ENCODE measurements at regions of chr4 and their contacts with region 1.

Region 1: GRCh38 chr4:74133786-74134499 is 24.0 kb upstream of the MTHFD2L start:
- DNase-seq: peak in 13 of 14 experiments; percentile 1 to 68 (median 13)
- ATAC-seq: peak; percentile 29
- H3K4me3 ChIP-seq: no peak overlapping the region
- H3K4me3 Mint-ChIP-seq: no peak overlapping the region
- H3K27ac ChIP-seq: no peak overlapping the region
- H3K27ac Mint-ChIP-seq: no peak overlapping the region
- H3K4me1 ChIP-seq: no peaks in the 10 kb centered on the region
- H3K4me1 Mint-ChIP-seq: no peaks in the 10 kb centered on the region
- H3K27me3 ChIP-seq: no peaks in the 10 kb centered on the region
- H3K27me3 Mint-ChIP-seq: peaks cover 4% of the 10 kb centered on the region
- CTCF ChIP-seq: no peak

Region 2: DNA sequence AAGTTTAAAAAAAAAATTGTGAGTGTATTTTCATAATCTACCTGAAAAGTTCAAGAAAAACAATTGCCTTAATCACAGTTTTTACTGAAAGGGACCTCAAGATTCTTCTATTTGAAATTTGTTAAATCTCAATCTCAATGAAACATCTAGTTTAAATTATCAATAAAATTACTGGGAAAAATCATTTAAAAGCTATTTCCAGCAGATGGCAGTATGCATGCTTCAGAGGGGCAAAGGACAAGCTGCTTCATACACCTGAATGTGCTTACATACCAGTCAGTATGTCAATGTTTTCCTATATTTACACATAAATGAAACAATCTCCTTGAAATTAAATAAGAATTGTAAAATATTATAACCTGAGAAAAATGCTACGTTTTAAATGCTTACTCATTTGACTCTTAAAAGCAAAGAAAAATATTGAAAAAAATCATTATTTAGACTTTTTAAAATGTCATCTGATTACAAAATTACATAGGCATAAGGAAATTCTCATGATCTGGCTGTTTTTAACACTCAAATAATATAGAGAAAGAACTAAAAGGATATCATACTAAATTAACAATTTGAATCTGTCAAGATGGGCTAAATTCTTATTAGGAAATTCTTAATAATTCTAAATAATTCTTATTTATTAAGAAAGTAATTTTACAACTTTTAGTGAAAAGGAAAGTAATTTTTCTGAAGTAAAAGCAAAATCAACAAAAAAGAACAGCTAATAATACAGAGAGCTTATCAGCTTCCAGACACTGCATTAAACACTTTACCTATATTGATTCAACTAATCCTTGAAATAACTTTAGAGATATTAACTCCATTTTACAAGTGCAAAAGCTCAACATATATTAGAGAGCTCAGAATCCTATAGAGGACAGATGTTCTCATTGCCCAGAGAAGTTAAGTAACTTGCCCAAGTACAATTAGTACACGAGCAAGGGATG is 1807.0 kb before region 1 on chr4:
- CTCF ChIA-PET with region 1: no interaction called
- POLR2A ChIA-PET with region 1: no interaction called
- intact Hi-C with region 1: loop called in 1 of 2 experiments (anchors 10 kb)
- DNase-seq: peak in 3 of 14 experiments; percentile 9 to 14 (median 12)
- ATAC-seq: no peak
- H3K4me3 ChIP-seq: no peak overlapping the region
- H3K4me3 Mint-ChIP-seq: no peak overlapping the region
- H3K27ac ChIP-seq: no peak overlapping the region
- H3K27ac Mint-ChIP-seq: no peak overlapping the region
- H3K4me1 ChIP-seq: no peaks in the 10 kb centered on the region
- H3K4me1 Mint-ChIP-seq: no peaks in the 10 kb centered on the region
- H3K27me3 ChIP-seq: peaks cover 0 to 3% of the 10 kb centered on the region in 2 experiments
- H3K27me3 Mint-ChIP-seq: peaks cover 17% of the 10 kb centered on the region
- CTCF ChIP-seq: peak; percentile 48

Region 3: DNA sequence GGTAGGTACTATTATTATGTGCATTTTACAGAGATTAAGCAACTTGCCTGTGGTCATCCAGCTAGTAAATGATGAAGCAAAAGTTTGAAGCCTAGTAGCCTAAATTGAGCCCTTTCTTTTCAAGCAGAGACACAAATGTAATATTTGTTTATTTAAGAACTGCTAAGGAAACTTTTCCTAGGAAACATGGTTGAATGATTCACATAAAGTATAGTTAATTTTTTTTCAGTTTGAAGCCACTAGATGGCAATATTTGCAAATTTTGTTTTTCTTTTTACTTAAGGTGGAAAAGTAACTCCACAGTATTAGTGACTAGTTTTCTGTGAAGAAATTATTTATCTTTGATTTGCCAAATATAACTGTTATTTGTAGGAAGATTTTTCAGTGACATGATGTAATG is 822.5 kb before region 1 on chr4:
- CTCF ChIA-PET with region 1: no interaction called
- POLR2A ChIA-PET with region 1: no interaction called
- intact Hi-C with region 1: loop called in 1 of 2 experiments (anchors 10 kb)
- DNase-seq: peak in 2 of 14 experiments; percentile 2 to 5
- ATAC-seq: no peak
- H3K4me3 ChIP-seq: no peak overlapping the region
- H3K4me3 Mint-ChIP-seq: no peak overlapping the region
- H3K27ac ChIP-seq: no peak overlapping the region
- H3K27ac Mint-ChIP-seq: no peak overlapping the region
- H3K4me1 ChIP-seq: no peaks in the 10 kb centered on the region
- H3K4me1 Mint-ChIP-seq: no peaks in the 10 kb centered on the region
- H3K27me3 ChIP-seq: no peaks in the 10 kb centered on the region
- H3K27me3 Mint-ChIP-seq: no peaks in the 10 kb centered on the region
- CTCF ChIP-seq: peak; percentile 61

Region 4: DNA sequence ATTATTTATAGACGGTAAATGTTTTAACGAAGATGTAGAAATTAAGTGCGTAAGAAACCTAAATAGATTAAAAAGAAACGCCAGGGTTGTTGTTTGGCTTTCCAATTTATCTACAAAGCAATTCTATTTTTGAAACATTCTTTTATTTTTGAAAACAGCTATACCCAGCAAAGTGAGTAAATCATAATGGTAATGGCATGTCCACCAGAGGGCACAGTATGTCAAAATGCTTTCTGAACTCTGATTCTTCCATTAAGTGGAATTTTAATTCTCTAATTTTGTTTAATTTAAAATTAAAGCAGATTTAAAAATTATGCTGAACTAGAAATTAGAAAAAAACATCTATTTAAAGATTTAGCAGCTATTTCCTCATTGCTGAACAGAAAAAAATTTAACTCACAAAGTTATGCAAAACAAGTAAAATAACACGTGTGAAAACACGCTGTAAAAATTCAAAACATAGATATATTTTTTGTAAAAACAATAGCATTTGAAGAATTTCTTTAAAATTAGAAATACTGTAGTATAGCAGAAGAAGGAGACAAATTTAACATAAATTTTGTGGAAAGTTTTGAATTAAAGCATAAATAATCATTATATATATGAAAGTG is 540.2 kb before region 1 on chr4:
- CTCF ChIA-PET with region 1: no interaction called
- POLR2A ChIA-PET with region 1: no interaction called
- intact Hi-C with region 1: loop called (anchors 10 kb)
- DNase-seq: peak in 3 of 14 experiments; percentile 6 to 23 (median 20)
- ATAC-seq: no peak
- H3K4me3 ChIP-seq: no peak overlapping the region
- H3K4me3 Mint-ChIP-seq: no peak overlapping the region
- H3K27ac ChIP-seq: no peak overlapping the region
- H3K27ac Mint-ChIP-seq: no peak overlapping the region
- H3K4me1 ChIP-seq: no peaks in the 10 kb centered on the region
- H3K4me1 Mint-ChIP-seq: no peaks in the 10 kb centered on the region
- H3K27me3 ChIP-seq: no peaks in the 10 kb centered on the region
- H3K27me3 Mint-ChIP-seq: no peaks in the 10 kb centered on the region
- CTCF ChIP-seq: peak; percentile 45

Region 5: DNA sequence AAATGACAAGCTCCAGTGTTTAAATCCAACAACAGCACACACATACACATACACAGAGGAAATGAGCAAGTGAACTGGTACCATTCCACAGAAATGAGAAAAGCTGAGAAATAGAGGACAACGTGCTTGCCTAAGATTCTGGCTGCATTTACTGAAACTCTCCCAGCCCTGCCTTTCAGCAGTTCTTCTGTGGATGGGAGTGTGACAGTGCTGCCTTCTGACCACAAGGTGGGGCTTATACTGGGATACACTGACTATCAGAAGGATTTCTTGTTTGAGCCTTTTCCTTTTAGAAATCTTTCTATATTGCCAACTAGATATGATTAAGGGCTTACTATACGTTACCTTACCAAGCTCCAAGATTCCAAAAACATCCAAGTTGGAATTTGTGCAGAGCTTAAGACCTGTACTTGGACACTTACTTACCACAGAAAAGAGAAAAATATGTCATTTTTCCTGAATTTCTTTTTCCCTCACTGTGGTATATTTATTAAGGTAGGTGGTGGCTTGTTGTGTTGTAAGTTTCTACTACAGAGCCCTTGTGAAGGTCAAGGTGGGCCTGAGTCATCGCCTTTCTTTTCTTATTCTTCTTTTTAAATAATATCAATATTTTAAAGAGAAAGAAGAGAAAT is 404.3 kb before region 1 on chr4:
- CTCF ChIA-PET with region 1: no interaction called
- POLR2A ChIA-PET with region 1: no interaction called
- intact Hi-C with region 1: loop called in 1 of 2 experiments (anchors 10 kb)
- DNase-seq: no peak
- ATAC-seq: no peak
- H3K4me3 ChIP-seq: no peak overlapping the region
- H3K4me3 Mint-ChIP-seq: no peak overlapping the region
- H3K27ac ChIP-seq: no peak overlapping the region
- H3K27ac Mint-ChIP-seq: no peak overlapping the region
- H3K4me1 ChIP-seq: no peaks in the 10 kb centered on the region
- H3K4me1 Mint-ChIP-seq: no peaks in the 10 kb centered on the region
- H3K27me3 ChIP-seq: no peaks in the 10 kb centered on the region
- H3K27me3 Mint-ChIP-seq: no peaks in the 10 kb centered on the region
- CTCF ChIP-seq: peak; percentile 33

Region 6: DNA sequence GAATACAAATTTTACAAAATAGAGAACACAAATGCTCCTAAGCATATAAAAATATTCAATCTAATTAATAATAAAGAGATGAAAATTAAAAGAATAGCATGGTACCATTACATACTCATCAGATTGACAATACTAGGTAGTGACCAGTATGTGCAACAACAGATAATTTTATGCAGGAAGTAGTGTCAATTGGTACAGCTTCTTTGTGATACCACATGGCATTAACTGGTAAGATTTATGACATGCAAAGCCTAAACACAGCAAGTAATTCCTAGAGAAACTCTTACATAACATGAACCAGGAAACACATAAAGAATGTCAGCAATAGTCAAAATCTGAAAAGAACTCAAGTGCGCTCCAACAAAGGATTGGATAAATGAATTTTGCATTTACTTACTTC is 61.2 kb before region 1 on chr4:
- CTCF ChIA-PET with region 1: no interaction called
- POLR2A ChIA-PET with region 1: no interaction called
- intact Hi-C with region 1: no loop called
- DNase-seq: no peak
- ATAC-seq: no peak
- H3K4me3 ChIP-seq: no peak overlapping the region
- H3K4me3 Mint-ChIP-seq: no peak overlapping the region
- H3K27ac ChIP-seq: no peak overlapping the region
- H3K27ac Mint-ChIP-seq: no peak overlapping the region
- H3K4me1 ChIP-seq: no peaks in the 10 kb centered on the region
- H3K4me1 Mint-ChIP-seq: no peaks in the 10 kb centered on the region
- H3K27me3 ChIP-seq: no peaks in the 10 kb centered on the region
- H3K27me3 Mint-ChIP-seq: peaks cover 3% of the 10 kb centered on the region
- CTCF ChIP-seq: no peak